Pancreas (tissue), 10 donors: ENCODE measurements at regions of chr1 and their contacts with region 1.

Region 1: DNA sequence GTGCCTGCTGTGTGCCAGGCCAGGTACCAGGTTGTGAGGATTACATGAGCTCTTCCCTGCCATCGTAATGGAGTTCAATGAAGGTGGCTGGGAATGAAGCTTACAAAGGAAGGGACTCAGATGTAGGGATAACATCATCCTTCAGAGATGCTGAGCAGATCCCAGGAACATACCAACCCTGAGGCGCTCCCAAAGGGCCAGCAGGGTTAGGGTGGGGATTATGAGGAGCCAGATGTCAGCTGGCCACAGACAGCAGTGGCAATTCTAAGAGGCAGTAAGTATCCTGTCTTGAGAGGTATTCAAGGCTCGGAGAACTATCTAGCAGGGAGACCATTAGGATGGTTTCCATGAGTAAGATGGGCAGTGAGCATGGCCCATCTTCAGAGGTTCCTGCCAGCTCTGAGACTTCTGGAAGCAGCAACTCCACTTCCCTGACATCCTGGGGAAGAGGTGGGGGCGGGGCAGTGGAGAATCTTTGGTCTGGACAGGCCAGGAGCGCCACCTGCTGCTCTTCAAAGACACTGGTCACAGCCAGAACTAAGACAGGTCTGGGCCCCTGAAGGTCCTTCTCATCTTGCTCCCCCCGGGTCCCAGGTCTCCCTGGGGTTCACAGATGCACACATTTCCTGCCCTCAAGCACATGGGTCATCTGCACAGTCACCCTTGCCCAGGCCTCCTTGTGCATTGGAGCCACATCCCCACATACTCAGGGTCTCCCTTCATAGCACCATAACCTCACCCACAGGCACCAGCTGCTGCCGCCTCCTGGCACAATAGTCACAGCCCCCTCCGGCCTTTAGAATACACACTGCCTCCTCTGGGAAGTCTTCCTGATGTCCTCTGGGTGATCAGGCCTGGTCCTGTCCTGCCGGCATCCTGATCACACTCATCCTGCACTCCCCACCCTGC is 2.7 kb upstream of the SDC3 start:
- DNase-seq: peak; percentile 75 to 93 (median 86)
- ATAC-seq: peak; percentile 79 to 88 (median 86)
- H3K4me3 ChIP-seq: no peak overlapping the region
- H3K27ac ChIP-seq: no peak overlapping the region
- H3K4me1 ChIP-seq: no peaks in the 10 kb centered on the region
- H3K27me3 ChIP-seq: no peaks in the 10 kb centered on the region
- CTCF ChIP-seq: peak; percentile 36 to 73 (median 69)

Region 2: GRCh38 chr1:30779294-30780071 is 131.8 kb before region 1 on chr1:
- intact Hi-C with region 1: loop called in 1 of 3 experiments (anchors 5 kb)
- DNase-seq: peak; percentile 55 to 96 (median 79)
- ATAC-seq: peak; percentile 71 to 77 (median 72)
- H3K4me3 ChIP-seq: no peak overlapping the region
- H3K27ac ChIP-seq: no peak overlapping the region
- H3K4me1 ChIP-seq: peaks cover 0 to 6% (median 0%) of the 10 kb centered on the region in 3 donors
- H3K27me3 ChIP-seq: peaks cover 0 to 5% (median 0%) of the 10 kb centered on the region in 4 donors
- CTCF ChIP-seq: peak; percentile 84 to 98 (median 93)

Region 3: GRCh38 chr1:30801771-30802198 is 109.5 kb before region 1 on chr1:
- intact Hi-C with region 1: loop called (anchors 2 to 10 kb)
- DNase-seq: peak; percentile 51 to 97 (median 84)
- ATAC-seq: peak; percentile 73 to 87 (median 77)
- H3K4me3 ChIP-seq: no peak overlapping the region
- H3K27ac ChIP-seq: no peak overlapping the region
- H3K4me1 ChIP-seq: peaks cover 0 to 23% (median 0%) of the 10 kb centered on the region in 3 donors
- H3K27me3 ChIP-seq: no peaks in the 10 kb centered on the region
- CTCF ChIP-seq: peak; percentile 74 to 92 (median 88)

Region 4: DNA sequence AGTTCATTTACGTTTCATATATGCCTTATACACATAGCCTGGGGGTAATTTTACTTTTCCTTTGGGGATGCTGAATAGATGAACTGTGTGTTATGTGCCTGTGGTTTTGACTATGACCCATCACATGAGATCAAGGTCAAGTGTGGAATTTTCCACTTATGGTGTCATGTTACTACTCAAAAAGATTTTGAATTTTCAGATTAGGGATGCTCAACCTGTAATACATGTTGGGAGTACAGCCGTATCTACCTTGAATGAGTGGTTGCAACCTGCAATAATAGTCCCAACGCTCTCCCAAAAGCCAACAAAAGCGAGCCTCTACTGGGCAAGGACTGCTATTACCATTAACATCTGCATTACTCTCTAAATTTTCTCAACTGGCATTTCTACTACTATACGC is 65.8 kb after region 1 on chr1:
- intact Hi-C with region 1: no loop called
- DNase-seq: no peak
- ATAC-seq: peak in 3 of 4 donors; percentile 10 to 32 (median 24)
- H3K4me3 ChIP-seq: no peak overlapping the region
- H3K27ac ChIP-seq: peak overlapping the region in 1 of 4 donors; percentile 61
- H3K4me1 ChIP-seq: peaks cover 17 to 26% (median 21%) of the 10 kb centered on the region in 3 donors
- H3K27me3 ChIP-seq: no peaks in the 10 kb centered on the region
- CTCF ChIP-seq: no peak